Mammary epithelial cell (primary cell): ENCODE measurements at regions of chr20 and their contacts with region 1.

Region 1: DNA sequence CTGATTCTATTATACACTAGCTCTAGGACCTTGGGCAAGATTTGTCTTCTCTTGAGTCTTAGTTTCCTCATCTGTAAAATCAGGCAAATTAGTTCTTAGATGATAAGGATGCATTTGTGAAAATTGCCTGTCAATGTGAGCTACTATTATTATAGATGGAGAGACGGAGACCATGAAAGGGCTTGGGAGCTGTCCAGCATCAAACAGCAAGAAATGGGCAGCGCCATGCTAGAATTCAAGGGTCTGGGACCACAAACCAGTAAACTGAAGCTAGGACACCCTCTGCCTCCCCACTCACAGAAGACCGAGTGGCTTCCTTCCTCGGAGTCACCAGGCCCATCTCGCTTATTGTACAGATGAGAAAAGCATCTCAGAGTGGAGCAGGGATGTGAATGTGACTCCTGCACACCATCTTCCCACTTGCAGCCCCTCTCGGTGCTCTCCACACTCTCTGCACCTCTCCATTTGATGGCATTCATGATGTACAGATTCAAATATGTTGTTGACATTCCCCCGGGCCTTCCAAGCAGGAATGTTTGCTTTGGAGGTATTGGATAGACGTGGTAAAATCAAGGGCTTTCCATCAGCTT is 24.1 kb upstream of the BPIFA3 start:
- DNase-seq: no peak
- H3K4me3 ChIP-seq: no peak overlapping the region
- H3K27ac ChIP-seq: no peak overlapping the region
- H3K4me1 ChIP-seq: no peaks in the 10 kb centered on the region
- H3K27me3 ChIP-seq: no peaks in the 10 kb centered on the region
- CTCF ChIP-seq: no peak

Region 2: DNA sequence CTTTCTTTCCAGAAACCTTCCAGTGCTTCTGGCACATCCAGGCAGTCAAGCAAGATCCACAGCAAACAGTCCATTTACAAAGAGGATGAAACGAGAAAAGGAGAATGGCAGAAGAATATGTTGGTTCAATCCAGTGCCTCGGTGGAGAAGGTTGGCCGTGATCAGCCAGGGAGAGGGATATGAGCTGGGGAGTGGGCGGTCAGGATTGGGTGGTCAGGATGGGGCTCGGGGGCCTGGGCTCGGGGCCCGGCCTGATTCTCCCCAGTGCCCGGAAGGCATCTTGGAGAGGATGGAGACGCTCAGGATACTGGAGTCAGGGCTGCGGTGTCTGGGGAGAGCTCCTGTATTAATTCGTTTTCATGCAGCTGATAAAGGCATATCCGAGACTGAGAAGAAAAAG is 272.9 kb before region 1 on chr20:
- CTCF ChIA-PET with region 1: no interaction called
- dilution Hi-C with region 1: no loop called
- in situ Hi-C with region 1: no loop called
- intact Hi-C with region 1: no loop called
- DNase-seq: no peak
- H3K4me3 ChIP-seq: no peak overlapping the region
- H3K27ac ChIP-seq: no peak overlapping the region
- H3K4me1 ChIP-seq: no peaks in the 10 kb centered on the region
- H3K27me3 ChIP-seq: no peaks in the 10 kb centered on the region
- CTCF ChIP-seq: no peak

Region 3: GRCh38 chr20:33130568-33131061 is 62.4 kb before region 1 on chr20:
- CTCF ChIA-PET with region 1: no interaction called
- dilution Hi-C with region 1: loop called (anchors 5 kb)
- in situ Hi-C with region 1: no loop called
- intact Hi-C with region 1: no loop called
- DNase-seq: peak; percentile 1
- H3K4me3 ChIP-seq: no peak overlapping the region
- H3K27ac ChIP-seq: no peak overlapping the region
- H3K4me1 ChIP-seq: no peaks in the 10 kb centered on the region
- H3K27me3 ChIP-seq: no peaks in the 10 kb centered on the region
- CTCF ChIP-seq: no peak

Region 4: GRCh38 chr20:33178726-33179125 is 14.3 kb before region 1 on chr20:
- CTCF ChIA-PET with region 1: no interaction called
- dilution Hi-C with region 1: no loop called
- in situ Hi-C with region 1: no loop called
- intact Hi-C with region 1: no loop called
- DNase-seq: no peak
- H3K4me3 ChIP-seq: no peak overlapping the region
- H3K27ac ChIP-seq: no peak overlapping the region
- H3K4me1 ChIP-seq: no peaks in the 10 kb centered on the region
- H3K27me3 ChIP-seq: no peaks in the 10 kb centered on the region
- CTCF ChIP-seq: no peak

Region 5: DNA sequence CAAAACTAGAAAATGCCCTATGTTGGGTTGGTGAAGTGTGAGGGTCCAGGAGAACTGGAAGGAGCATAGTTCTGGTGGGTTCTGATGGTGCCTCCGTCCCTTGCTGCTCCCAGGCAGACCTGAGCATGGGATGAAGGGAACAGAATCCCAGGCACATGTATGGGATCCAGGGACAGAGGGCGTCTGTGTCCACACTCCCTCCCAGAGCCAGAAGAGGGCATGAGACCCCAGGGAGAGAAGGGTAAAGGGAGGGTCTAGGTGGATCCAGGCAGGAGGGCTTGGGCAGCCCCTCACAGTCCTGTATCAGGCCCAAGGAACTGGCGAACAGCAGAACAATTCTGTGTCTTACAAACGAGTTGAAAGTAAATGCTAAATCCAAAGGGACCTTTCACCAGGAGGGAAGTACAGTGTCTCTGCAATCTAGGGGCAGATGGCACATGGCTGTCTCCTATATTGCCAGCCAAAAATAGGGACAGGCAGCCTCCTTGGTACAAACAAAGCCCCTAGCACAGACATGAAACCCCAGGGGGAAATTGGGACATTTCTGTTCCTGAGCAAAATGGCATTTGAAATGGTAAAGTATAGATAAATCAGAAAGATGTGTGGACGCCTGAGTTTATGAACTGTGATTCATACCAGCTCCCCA is 40.2 kb after region 1 on chr20:
- CTCF ChIA-PET with region 1: no interaction called
- dilution Hi-C with region 1: no loop called
- in situ Hi-C with region 1: no loop called
- intact Hi-C with region 1: no loop called
- DNase-seq: no peak
- H3K4me3 ChIP-seq: no peak overlapping the region
- H3K27ac ChIP-seq: no peak overlapping the region
- H3K4me1 ChIP-seq: no peaks in the 10 kb centered on the region
- H3K27me3 ChIP-seq: no peaks in the 10 kb centered on the region
- CTCF ChIP-seq: no peak

Region 6: DNA sequence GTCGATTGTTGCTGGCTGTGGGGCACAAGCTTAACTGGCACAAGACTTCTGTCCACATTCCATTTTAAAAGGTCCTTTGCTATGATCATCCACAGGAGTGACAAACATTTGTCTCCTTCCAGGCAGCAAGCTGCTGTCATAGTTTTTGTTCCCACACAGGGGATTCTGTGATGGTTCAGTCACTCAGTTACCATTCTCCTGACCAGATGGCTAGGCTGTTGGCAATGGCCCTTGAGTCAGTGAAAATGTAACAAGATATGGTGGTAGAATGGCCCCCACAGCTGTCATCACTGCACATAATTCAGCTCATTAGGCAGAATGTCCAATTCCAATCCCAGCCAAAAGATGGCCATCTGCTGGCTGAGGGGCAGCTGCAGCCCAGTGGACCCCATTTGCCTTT is 56.4 kb after region 1 on chr20:
- CTCF ChIA-PET with region 1: no interaction called
- dilution Hi-C with region 1: loop called (anchors 5 kb)
- in situ Hi-C with region 1: no loop called
- intact Hi-C with region 1: no loop called
- DNase-seq: no peak
- H3K4me3 ChIP-seq: no peak overlapping the region
- H3K27ac ChIP-seq: no peak overlapping the region
- H3K4me1 ChIP-seq: no peaks in the 10 kb centered on the region
- H3K27me3 ChIP-seq: no peaks in the 10 kb centered on the region
- CTCF ChIP-seq: no peak